Esophagus squamous epithelium (tissue), 5 donors: ENCODE measurements at regions of chr18 and their contacts with region 1.

Region 1: GRCh38 chr18:31206787-31207381 is 44.2 kb upstream of the DSC1 start:
- DNase-seq: no peak
- H3K4me3 ChIP-seq: peak overlapping the region; percentile 10 to 47 (median 33)
- H3K27ac ChIP-seq: peak overlapping the region; percentile 61 to 91 (median 84)
- H3K4me1 ChIP-seq: peaks cover 0 to 70% (median 14%) of the 10 kb centered on the region in 3 donors
- H3K27me3 ChIP-seq: no peaks in the 10 kb centered on the region
- CTCF ChIP-seq: peak in 3 of 6 experiments; percentile 37 to 49 (median 42)
- POLR2A ChIP-seq: peak in 1 of 4 donors; percentile 23

Region 2: GRCh38 chr18:31101183-31102024 is 105.5 kb before region 1 on chr18:
- intact Hi-C with region 1: loop called (anchors 10 kb)
- DNase-seq: no peak
- H3K4me3 ChIP-seq: peak overlapping the region; percentile 67 to 77 (median 72)
- H3K27ac ChIP-seq: peak overlapping the region; percentile 93 to 99 (median 96)
- H3K4me1 ChIP-seq: peaks cover 0 to 40% (median 0%) of the 10 kb centered on the region in 3 donors
- H3K27me3 ChIP-seq: peaks cover 0 to 28% (median 0%) of the 10 kb centered on the region in 4 donors
- CTCF ChIP-seq: no peak
- POLR2A ChIP-seq: peak in 2 of 4 donors; percentile 18 to 52